BJ (cell line): ENCODE measurements at regions of chr7 and their contacts with region 1.

Region 1: GRCh38 chr7:992709-993607 is 10.0 kb downstream of the CYP2W1 start:
- DNase-seq: peak; percentile 45
- H3K4me3 ChIP-seq: no peak overlapping the region
- H3K27me3 ChIP-seq: no peaks in the 10 kb centered on the region
- CTCF ChIP-seq: peak; percentile 100

Region 2: GRCh38 chr7:699061-699807 is 293.7 kb before region 1 on chr7:
- CTCF ChIA-PET with region 1: no interaction called
- POLR2A ChIA-PET with region 1: no interaction called
- DNase-seq: no peak
- H3K4me3 ChIP-seq: no peak overlapping the region
- H3K27me3 ChIP-seq: no peaks in the 10 kb centered on the region
- CTCF ChIP-seq: no peak

Region 3: DNA sequence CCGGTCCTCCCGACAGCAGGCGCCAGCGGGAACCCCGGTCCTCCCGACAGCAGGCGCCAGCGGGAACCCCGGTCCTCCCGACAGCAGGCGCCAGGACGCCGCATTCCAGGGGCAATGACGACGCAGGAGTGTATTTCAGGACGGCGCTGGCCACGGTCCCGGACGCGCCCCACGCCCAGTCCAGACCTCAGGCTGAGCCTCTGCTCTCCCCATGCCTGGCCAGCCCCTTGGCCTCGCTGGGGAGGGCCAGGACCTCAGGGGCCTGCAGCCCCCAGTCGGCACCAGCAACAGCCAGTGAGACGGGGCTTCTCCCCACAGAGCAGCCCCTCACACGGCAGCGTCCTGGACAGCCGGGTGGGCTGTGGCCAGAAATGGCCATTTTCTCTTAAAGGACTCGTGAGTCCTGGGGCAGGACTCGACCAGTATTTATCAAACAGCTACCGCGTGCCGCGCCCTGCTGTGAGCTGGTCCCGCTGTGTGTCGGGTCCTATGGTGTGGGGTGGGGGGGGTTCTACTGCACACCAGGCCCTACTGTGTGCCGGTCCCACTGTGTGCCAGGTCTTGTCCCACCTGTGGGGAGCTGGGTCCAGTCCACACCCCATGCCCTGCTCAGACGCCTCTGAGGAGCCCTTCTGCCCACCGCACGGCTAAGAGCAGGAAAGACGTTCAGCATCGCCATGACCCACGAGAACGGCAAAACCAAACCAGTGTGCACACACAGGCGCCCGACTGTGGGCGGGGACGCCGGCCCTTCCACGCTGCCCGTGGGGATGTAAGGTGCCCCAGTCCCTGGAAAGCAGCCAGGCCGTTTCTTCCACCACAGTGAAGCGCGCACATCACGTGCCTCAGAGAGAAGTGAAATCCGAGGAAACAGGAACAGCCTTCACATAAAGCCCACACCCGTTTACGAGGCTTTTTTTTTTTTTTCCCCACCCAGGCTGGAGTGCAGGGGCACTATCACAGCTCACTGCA is 83.3 kb before region 1 on chr7:
- CTCF ChIA-PET with region 1: interaction called, 23 read pairs
- POLR2A ChIA-PET with region 1: no interaction called
- DNase-seq: no peak
- H3K4me3 ChIP-seq: peak overlapping the region; percentile 21
- H3K27me3 ChIP-seq: no peaks in the 10 kb centered on the region
- CTCF ChIP-seq: no peak

Region 4: DNA sequence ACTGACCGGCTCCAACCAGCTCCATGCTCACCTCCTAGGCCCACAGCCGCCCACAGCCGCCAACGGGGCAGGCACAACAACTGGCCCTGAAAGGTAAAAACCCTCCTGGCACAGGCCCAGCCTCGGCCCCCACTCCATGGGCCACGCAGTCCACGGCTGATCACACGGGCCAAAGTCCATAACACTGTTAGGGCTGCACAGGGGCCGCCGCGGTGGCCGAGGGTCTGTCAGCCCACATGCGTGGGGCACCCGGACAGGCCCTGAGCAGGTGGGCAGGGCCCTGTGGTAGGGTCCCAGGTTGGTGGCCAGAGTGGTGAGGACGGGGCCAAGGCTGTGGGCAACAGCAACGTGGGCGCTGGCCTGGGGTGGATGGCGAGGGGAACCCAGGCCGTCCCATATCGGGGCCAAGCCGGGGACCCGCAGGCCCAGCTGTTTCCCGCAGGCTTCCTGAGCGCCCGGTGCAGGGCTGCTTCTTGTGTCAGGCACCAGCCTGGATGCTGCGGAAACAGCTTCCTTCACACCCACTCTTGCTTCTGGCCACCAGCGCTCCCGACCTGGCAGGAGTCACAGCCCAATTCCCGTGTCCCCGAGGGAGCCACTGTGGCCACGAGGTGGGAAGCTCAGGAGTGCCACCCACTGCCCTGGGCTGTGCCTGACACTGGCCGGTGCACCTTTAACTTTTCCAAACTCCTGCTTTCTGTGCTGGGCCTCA is 19.2 kb after region 1 on chr7:
- CTCF ChIA-PET with region 1: interaction called, 32 read pairs
- POLR2A ChIA-PET with region 1: no interaction called
- DNase-seq: no peak
- H3K4me3 ChIP-seq: no peak overlapping the region
- H3K27me3 ChIP-seq: no peaks in the 10 kb centered on the region
- CTCF ChIP-seq: no peak

Region 5: GRCh38 chr7:1044191-1045068 is 51.5 kb after region 1 on chr7 and contains the start of gene GPR146:
- CTCF ChIA-PET with region 1: interaction called, 55 read pairs
- POLR2A ChIA-PET with region 1: no interaction called
- DNase-seq: peak; percentile 73
- H3K4me3 ChIP-seq: peak within 1 kb of the TSS; percentile 65
- H3K27me3 ChIP-seq: no peaks in the 10 kb centered on the region
- CTCF ChIP-seq: peak; percentile 80
- polyA plus RNA-seq, gene GPR146: 2.8 and 4.5 TPM in 2 replicates

Region 6: DNA sequence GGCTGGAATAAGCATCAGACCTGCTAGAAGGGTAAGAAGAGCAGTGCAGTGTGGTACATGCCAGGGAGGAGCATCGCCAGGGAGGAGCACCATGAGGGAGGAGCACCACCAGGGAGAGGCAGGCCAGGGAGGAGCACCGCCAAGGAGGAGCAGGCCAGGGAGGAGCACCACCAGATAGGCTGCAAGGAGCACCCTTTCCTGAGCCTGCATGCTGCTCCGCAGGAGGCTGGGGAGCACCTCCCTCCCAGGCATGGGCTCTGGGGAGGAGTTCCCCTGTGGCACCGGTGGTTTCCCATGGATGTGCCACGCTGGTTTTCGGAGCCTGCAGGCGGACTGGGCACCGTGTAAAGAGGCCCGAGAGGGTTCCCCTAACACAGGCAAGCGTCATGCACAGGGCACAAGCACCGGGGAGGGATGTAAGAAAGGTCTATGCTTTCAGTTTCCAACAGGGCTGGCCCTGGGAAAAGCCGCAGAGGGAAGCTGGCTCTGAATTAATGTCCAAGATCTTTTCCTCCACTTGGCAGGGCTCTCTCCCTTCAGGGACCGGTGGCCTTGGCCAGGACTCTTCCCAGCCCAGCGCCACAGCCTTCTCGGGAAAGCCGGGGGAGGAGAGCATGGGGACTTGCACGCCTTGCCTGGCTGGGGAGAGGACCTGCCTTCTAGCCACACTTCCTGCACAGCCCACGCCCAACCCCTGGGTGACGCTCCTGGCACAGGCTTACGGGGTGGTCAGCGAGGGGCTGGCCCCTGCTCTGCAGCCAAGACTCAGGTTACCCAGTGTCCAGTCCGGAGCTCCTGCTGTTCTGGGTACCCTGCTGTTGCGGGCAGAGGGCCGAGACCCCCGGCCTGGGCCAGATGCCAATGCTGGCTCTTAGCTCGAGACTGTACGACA is 83.5 kb after region 1 on chr7:
- CTCF ChIA-PET with region 1: interaction called, 18 read pairs
- POLR2A ChIA-PET with region 1: no interaction called
- DNase-seq: no peak
- H3K4me3 ChIP-seq: no peak overlapping the region
- H3K27me3 ChIP-seq: no peaks in the 10 kb centered on the region
- CTCF ChIP-seq: no peak

Region 7: DNA sequence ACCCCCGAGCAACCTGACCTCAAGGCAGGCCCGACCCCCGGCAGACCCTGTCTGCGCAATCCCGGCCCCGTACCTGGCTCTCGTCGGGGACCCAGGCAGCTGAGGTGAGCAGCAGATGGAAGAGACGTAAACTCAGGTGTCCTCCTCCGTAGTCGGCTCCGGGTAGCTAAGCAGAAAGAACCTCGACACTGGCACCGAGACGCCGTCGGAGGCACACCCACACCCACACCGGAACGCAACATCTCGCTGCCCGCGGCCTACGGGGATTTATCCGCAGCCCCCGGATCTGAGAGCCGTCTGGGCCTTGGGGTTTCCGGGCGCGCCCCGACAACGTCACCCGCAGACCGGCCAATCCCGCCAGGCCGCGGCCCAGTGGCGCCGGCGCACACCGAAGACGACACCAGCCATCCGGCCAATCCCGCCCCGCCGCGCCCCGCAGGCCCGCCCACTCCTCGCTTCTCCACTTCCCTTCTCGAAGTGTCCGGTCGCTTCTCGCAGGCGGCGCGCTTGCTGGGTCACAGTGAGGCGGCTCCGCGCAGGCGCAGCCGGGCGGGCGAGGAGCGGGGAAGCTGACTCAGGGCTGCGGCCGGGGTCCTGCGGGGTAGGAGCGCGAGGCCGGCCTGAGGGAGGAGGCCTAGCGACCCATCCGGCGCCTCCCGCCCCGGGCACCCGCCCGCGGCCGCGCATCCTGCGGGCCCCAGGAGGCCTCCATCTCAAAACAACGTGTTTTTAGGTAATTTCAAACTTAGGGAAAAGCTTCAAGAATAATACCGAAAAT is 167.1 kb after region 1 on chr7 and contains the start of gene ZFAND2A:
- CTCF ChIA-PET with region 1: interaction called, 10 read pairs
- POLR2A ChIA-PET with region 1: no interaction called
- DNase-seq: peak; percentile 77
- H3K4me3 ChIP-seq: peak within 1 kb of the TSS; percentile 55
- H3K27me3 ChIP-seq: no peaks in the 10 kb centered on the region
- CTCF ChIP-seq: no peak
- polyA plus RNA-seq, gene ZFAND2A: 43.6 and 46.3 TPM in 2 replicates